GM10248 (cell line): ENCODE measurements at regions of chr14 and their contacts with region 1.

Region 1: GRCh38 chr14:75560962-75561432 is 17.4 kb upstream of the FLVCR2 start:
- DNase-seq: peak; percentile 61
- CTCF ChIP-seq: peak; percentile 76

Region 2: GRCh38 chr14:75452900-75453747 is 107.9 kb before region 1 on chr14:
- CTCF ChIA-PET with region 1: interaction called, 10 read pairs
- POLR2A ChIA-PET with region 1: no interaction called
- DNase-seq: no peak
- CTCF ChIP-seq: no peak

Region 3: GRCh38 chr14:75497191-75497590 is 63.8 kb before region 1 on chr14:
- CTCF ChIA-PET with region 1: interaction called, 12 read pairs
- POLR2A ChIA-PET with region 1: no interaction called
- DNase-seq: peak; percentile 65
- CTCF ChIP-seq: peak; percentile 14

Region 4: GRCh38 chr14:75514673-75515628 is 46.0 kb before region 1 on chr14:
- CTCF ChIA-PET with region 1: interaction called, 105 read pairs
- POLR2A ChIA-PET with region 1: no interaction called
- DNase-seq: peak; percentile 60
- CTCF ChIP-seq: no peak

Region 5: DNA sequence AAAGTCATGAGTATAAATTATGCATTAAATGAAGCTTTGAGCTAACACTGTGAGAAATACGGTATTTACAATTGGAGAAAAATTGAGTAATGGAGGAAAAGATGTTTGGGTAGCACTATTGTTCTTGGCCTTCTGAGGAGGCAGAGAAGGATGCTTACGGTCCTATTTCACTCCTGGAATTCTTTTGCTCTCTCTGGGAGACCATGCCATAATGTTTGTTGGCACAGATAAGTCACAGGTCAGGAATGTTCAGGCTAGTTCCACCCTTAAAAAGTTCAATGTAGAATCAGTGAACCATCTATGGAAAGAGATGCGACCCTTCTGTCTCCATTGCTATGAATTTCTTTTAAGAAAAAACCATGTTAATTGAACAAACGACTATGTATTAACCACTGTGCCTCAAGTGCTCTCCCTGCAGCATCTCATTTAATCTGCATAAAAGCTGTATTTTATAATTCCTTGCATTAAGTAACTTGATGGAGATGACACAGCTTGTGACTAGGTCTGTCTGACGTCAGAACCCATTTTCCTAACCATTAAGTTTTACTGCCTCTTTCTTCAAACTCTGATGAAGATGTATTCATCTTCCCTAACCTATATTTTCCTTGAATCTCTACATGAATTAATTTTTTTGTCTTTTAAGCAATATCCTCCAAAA is 29.2 kb before region 1 on chr14:
- CTCF ChIA-PET with region 1: interaction called, 14 read pairs
- POLR2A ChIA-PET with region 1: no interaction called
- DNase-seq: no peak
- CTCF ChIP-seq: no peak

Region 6: GRCh38 chr14:75542588-75543091 is 18.4 kb before region 1 on chr14:
- CTCF ChIA-PET with region 1: interaction called, 82 read pairs
- POLR2A ChIA-PET with region 1: interaction called, 4 read pairs
- DNase-seq: peak; percentile 82
- CTCF ChIP-seq: no peak

Region 7: DNA sequence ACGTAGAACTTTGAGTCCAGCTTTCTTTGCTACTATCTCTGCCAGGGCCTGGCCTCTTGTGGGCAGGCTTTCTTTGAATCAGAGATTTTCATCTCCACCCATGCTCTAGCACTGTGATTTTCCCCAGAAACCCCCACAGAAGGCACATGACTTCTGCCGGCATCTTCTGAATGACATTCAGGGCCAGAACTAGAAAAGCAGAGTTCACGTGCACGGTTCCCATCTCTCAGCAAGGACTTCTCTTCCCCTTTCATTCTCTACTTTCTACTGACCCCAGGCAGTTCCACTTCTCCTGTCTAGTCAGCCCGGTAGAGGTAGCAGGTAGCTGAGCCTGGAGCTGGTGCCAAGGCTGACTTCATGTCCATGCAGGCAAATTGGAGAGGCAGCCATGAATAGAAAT is 11.8 kb before region 1 on chr14:
- CTCF ChIA-PET with region 1: interaction called, 82 read pairs
- POLR2A ChIA-PET with region 1: no interaction called
- DNase-seq: peak; percentile 62
- CTCF ChIP-seq: no peak

Region 8: GRCh38 chr14:75968456-75968855 is 407.5 kb after region 1 on chr14:
- CTCF ChIA-PET with region 1: no interaction called
- POLR2A ChIA-PET with region 1: no interaction called
- DNase-seq: no peak
- CTCF ChIP-seq: no peak